ENCODE measurements at regions of chr13 and their contacts with region 1.

Region 1: DNA sequence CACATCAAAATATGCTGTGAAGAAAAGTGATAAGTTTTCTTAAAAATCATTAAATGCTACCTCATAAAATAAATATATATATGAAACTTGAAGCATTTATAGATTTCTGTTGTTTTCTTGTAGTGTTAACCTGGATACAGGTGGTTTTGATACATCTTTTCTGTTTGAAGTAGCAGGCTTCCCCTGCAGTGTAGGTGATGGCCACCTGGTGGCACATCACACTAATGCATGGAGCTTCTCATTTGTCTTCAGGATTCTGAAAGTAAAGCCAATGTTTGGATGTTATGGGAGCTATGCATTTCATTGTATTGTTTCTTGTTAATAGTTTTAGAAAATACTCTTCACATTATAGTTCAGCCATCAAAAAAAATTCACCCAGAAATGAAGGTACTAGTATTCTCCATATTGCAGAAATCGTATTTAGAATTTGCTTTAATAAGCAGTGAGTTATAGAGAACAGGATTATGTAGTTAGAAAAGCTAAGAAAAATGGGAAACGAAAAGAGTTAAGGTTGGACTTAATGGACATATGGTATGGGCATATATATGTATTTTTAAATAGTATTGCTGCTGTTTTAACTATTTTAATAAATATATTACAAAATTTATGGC is 18.7 kb downstream of the GPR180 start:
- DNase-seq: peak; percentile 39
- ATAC-seq: peak; percentile 90
- H3K4me3 ChIP-seq: no peak overlapping the region
- H3K27ac ChIP-seq: no peak overlapping the region
- H3K4me1 ChIP-seq: no peaks in the 10 kb centered on the region
- H3K27me3 ChIP-seq: peaks cover 0 to 4% of the 10 kb centered on the region in 2 experiments; a peak in 1 of 5 replicates
- CTCF ChIP-seq: peak; percentile 66
- EP300 ChIP-seq: no peak
- POLR2A ChIP-seq: no peak
- RAD21 ChIP-seq: peak; percentile 41; the same call in 1 of the 2 replicates

Region 2: GRCh38 chr13:92716749-92717148 is 1903.6 kb before region 1 on chr13:
- CTCF ChIA-PET with region 1: interaction called, 3 read pairs
- POLR2A ChIA-PET with region 1: no interaction called
- in situ Hi-C with region 1: no loop called
- intact Hi-C with region 1: loop called (anchors 5 kb)
- DNase-seq: peak; percentile 5
- ATAC-seq: no peak
- H3K4me3 ChIP-seq: no peak overlapping the region
- H3K27ac ChIP-seq: no peak overlapping the region
- H3K4me1 ChIP-seq: no peaks in the 10 kb centered on the region
- H3K27me3 ChIP-seq: no peaks in the 10 kb centered on the region
- CTCF ChIP-seq: 0 out of 2 replicates have a peak, but pooled peaks have one; percentile 11
- EP300 ChIP-seq: no peak
- POLR2A ChIP-seq: no peak
- RAD21 ChIP-seq: no peak

Region 3: GRCh38 chr13:92896842-92897241 is 1723.5 kb before region 1 on chr13:
- CTCF ChIA-PET with region 1: no interaction called
- POLR2A ChIA-PET with region 1: no interaction called
- in situ Hi-C with region 1: no loop called
- intact Hi-C with region 1: loop called (anchors 2 kb)
- DNase-seq: peak; percentile 37
- ATAC-seq: peak; percentile 66
- H3K4me3 ChIP-seq: no peak overlapping the region
- H3K27ac ChIP-seq: no peak overlapping the region
- H3K4me1 ChIP-seq: no peaks in the 10 kb centered on the region
- H3K27me3 ChIP-seq: no peaks in the 10 kb centered on the region
- CTCF ChIP-seq: peak; percentile 58
- EP300 ChIP-seq: no peak
- POLR2A ChIP-seq: no peak
- RAD21 ChIP-seq: no peak

Region 4: DNA sequence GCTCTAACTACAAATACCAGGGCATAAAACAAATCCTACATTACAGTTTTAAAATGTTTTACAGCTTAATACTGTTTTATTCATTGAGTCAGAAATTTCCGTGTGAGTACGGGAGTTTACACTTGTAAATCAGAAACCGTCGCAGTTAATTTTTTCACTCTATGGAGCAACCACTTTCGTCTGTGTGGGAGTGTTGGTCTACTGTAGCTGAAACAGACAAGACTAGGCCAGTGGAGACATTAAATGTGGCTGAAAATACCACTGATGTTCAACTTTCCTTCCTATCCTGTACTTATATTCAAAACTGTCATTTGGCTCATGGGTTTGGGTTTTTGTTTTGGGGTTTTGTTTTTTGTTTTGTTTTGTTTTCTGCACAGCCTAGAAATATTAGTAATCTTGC is 409.6 kb before region 1 on chr13:
- CTCF ChIA-PET with region 1: no interaction called
- POLR2A ChIA-PET with region 1: no interaction called
- in situ Hi-C with region 1: no loop called
- intact Hi-C with region 1: no loop called
- DNase-seq: no peak
- ATAC-seq: no peak
- H3K4me3 ChIP-seq: no peak overlapping the region
- H3K27ac ChIP-seq: no peak overlapping the region
- H3K4me1 ChIP-seq: no peaks in the 10 kb centered on the region
- H3K27me3 ChIP-seq: no peaks in the 10 kb centered on the region
- CTCF ChIP-seq: no peak
- EP300 ChIP-seq: no peak
- POLR2A ChIP-seq: no peak
- RAD21 ChIP-seq: no peak

Region 5: DNA sequence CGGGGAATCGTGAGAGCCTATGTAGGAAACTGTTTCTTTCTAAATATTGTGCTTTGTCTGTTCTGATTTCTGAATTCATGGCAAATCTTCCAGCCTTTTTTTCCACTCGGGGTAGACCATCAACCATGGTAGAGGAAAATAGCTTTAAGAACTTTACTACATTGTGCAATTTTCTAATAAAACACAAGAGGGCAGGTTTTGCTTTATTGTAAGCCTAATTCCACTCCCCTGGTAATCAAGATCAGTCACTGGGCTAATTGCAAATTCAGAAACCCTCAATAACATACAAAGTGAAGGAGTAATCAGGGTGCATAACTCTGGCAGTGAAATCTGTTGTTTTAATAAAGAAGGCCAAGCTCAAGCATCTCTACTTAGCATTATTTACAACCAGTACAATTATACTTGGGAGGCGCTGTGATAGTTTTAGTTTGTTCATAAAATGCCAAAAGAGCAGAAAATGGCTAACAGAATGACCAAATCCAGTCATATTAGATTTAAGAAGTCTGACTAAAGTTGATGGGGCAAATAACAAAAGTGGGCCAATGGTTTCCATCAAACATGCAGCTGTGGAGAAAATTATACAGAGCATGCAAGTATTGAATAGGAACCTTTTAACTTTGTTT is 184.7 kb before region 1 on chr13:
- CTCF ChIA-PET with region 1: interaction called, 19 read pairs
- POLR2A ChIA-PET with region 1: no interaction called
- in situ Hi-C with region 1: loop called (anchors 5 kb)
- intact Hi-C with region 1: loop called (anchors 1 kb)
- DNase-seq: peak; percentile 27
- ATAC-seq: peak; percentile 52; the same call in 1 of the 3 replicates
- H3K4me3 ChIP-seq: no peak overlapping the region
- H3K27ac ChIP-seq: no peak overlapping the region
- H3K4me1 ChIP-seq: peaks cover 15% of the 10 kb centered on the region
- H3K27me3 ChIP-seq: peaks cover 0 to 11% of the 10 kb centered on the region in 2 experiments; a peak in 3 of 5 replicates
- CTCF ChIP-seq: peak; percentile 57
- EP300 ChIP-seq: no peak
- POLR2A ChIP-seq: no peak
- RAD21 ChIP-seq: 0 out of 2 replicates have a peak, but pooled peaks have one; percentile 14

Region 6: GRCh38 chr13:95480131-95480545 is 859.7 kb after region 1 on chr13:
- CTCF ChIA-PET with region 1: no interaction called
- POLR2A ChIA-PET with region 1: no interaction called
- in situ Hi-C with region 1: no loop called
- intact Hi-C with region 1: loop called (anchors 2 kb)
- DNase-seq: no peak
- ATAC-seq: no peak
- H3K4me3 ChIP-seq: no peak overlapping the region
- H3K27ac ChIP-seq: no peak overlapping the region
- H3K4me1 ChIP-seq: no peaks in the 10 kb centered on the region
- H3K27me3 ChIP-seq: peaks cover 2 to 11% of the 10 kb centered on the region in 2 experiments
- CTCF ChIP-seq: no peak
- EP300 ChIP-seq: no peak
- POLR2A ChIP-seq: no peak
- RAD21 ChIP-seq: no peak

Region 7: DNA sequence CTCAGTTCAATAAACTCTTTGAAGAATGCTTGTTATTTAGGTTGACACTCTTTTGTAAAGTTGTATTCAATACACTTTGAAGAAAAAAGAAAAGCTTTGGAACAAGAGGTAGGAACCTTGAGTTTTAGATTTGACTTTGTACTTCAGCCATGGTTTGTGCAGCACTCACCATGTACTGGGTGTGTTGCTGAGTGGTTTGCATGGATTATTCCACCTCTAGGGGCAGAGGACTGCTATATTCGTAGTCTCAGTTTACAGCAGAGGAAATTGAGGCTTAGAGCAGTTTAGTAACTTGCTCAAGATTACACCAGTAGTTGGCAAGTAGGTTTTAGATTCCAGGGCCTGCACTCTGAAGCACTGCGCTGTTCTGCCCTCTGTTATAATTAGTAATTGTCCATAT is 1125.4 kb after region 1 on chr13:
- CTCF ChIA-PET with region 1: no interaction called
- POLR2A ChIA-PET with region 1: no interaction called
- in situ Hi-C with region 1: no loop called
- intact Hi-C with region 1: no loop called
- DNase-seq: no peak
- ATAC-seq: peak; percentile 66
- H3K4me3 ChIP-seq: no peak overlapping the region
- H3K27ac ChIP-seq: no peak overlapping the region
- H3K4me1 ChIP-seq: peaks cover 32% of the 10 kb centered on the region
- H3K27me3 ChIP-seq: no peaks in the 10 kb centered on the region
- CTCF ChIP-seq: no peak
- EP300 ChIP-seq: no peak
- POLR2A ChIP-seq: no peak
- RAD21 ChIP-seq: no peak

Measured in HepG2 (cell line).